ENCODE measurements at regions of chr17 and their contacts with region 1.

Region 1: GRCh38 chr17:82447876-82448275 is 2.7 kb downstream of the CYBC1 start:
- DNase-seq: no peak
- H3K4me3 ChIP-seq: no peak overlapping the region
- H3K27me3 ChIP-seq: no peaks in the 10 kb centered on the region
- CTCF ChIP-seq: no peak

Region 2: DNA sequence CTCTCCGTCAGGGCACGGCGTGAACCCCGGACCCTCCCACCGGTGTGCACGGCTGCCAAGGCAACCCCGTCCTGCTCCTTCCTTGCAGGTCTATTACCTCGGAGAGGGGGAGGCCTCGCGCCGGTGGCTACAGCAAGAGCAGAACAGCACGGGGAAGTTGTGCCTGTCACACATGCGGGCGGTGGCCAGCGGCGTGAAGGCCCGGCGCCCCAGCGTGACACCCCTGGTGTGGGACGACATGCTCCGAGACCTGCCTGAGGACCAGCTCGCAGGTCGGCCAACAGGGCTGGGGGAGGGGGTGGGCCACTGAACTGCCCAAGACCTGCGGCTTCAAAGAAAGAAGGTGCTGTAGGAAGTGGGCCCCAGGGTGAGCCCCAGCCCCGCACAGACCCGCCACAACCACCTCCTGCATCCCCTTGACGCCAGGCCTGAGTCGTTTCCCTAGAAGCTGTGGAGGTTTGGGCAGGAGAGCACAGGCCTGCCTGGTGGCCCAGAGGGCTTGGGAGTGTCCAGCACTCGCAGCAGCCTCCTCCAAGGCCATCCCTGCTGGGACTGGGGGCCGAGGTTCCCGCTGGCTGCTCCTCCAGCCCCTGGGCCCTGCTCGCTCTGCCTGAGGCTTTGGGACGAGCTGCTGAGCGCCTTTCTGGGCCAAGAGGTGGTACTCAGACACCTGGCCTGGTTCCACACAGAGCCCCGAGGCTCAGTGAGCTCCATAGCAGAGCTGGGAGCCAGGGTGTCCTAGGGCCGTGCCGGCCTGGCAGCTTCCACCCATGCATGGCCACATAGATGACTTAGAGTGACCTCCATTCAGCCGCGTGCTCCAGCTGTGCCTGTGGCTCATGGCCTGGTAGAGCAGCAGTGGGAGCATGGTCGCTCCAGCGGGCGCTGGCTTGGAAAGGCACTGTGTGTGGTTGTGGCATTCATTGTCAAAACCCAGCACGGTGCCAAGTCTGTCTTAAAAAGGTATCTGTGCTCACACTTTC is 12.0 kb before region 1 on chr17:
- CTCF ChIA-PET with region 1: no interaction called
- POLR2A ChIA-PET with region 1: no interaction called
- DNase-seq: no peak
- H3K4me3 ChIP-seq: no peak overlapping the region
- H3K27me3 ChIP-seq: no peaks in the 10 kb centered on the region
- CTCF ChIP-seq: no peak

Region 3: DNA sequence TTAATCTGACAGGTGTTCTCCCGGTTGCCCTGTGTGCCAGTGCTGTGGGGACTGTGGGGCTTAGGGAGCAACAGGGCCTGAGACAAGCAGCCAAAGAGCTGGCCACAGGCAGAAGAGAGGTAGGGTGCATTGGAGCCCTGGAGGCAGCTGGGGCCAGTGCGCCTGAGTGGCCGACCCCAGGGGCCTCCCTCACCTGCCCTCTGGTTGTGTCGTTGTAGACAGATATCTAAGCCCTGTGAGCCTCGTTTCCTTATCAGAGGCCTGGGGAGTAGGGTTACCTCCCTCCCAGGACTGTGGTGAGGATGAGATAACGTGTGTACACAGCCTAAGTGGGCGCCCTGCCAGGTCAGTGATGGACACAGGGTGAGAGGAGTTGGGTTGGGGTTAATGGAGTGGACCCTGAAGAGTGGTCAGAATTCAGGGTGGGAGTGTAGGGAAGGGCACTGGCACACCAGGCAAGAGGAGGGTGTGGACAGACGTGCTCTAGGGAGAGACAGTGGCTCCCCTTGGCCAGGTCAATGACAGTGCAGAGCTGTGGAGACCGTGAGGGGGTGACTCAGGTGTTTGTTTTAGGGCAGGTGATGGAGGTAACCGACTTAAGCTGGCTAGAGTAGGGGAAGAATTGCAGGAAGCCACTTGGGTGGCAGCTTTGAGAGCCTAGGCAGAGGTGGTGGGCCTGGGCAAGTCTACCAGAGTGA is 14.1 kb after region 1 on chr17:
- CTCF ChIA-PET with region 1: no interaction called
- POLR2A ChIA-PET with region 1: no interaction called
- DNase-seq: no peak
- H3K4me3 ChIP-seq: no peak overlapping the region
- H3K27me3 ChIP-seq: no peaks in the 10 kb centered on the region
- CTCF ChIP-seq: no peak

Region 4: GRCh38 chr17:82528484-82529265 is 80.8 kb after region 1 on chr17:
- CTCF ChIA-PET with region 1: interaction called, 3 read pairs
- POLR2A ChIA-PET with region 1: interaction called, 11 read pairs
- DNase-seq: no peak
- H3K4me3 ChIP-seq: no peak overlapping the region
- H3K27me3 ChIP-seq: no peaks in the 10 kb centered on the region
- CTCF ChIP-seq: peak; percentile 42; the same call in 1 of the 2 replicates

Region 5: DNA sequence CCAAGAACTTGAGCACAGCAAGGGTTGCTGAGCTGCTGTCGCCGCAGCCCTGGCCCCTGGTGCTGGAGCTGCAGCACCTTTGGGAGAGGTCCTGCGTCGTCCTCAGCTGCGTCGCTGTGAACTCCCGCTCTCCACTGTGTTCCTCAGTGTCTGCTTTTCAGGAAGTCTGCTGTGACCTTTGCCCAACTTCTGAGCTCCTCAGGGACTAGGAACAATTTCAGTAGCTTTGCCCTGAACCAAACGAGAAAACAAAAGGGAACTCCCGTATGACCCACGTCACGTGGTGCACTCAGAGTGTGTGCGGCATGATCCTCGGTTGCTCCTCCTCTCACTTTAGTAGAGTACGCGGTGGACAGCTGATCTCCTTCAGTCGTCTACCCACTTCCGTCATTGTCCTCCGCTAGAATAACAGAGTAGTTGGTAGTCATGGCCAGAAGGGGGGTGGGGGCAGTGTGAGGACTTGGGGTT is 156.1 kb after region 1 on chr17:
- CTCF ChIA-PET with region 1: no interaction called
- POLR2A ChIA-PET with region 1: no interaction called
- DNase-seq: no peak
- H3K4me3 ChIP-seq: no peak overlapping the region
- H3K27me3 ChIP-seq: no peaks in the 10 kb centered on the region
- CTCF ChIP-seq: no peak